PC-3 (cell line): ENCODE measurements at regions of chr2 and their contacts with region 1.

Region 1: DNA sequence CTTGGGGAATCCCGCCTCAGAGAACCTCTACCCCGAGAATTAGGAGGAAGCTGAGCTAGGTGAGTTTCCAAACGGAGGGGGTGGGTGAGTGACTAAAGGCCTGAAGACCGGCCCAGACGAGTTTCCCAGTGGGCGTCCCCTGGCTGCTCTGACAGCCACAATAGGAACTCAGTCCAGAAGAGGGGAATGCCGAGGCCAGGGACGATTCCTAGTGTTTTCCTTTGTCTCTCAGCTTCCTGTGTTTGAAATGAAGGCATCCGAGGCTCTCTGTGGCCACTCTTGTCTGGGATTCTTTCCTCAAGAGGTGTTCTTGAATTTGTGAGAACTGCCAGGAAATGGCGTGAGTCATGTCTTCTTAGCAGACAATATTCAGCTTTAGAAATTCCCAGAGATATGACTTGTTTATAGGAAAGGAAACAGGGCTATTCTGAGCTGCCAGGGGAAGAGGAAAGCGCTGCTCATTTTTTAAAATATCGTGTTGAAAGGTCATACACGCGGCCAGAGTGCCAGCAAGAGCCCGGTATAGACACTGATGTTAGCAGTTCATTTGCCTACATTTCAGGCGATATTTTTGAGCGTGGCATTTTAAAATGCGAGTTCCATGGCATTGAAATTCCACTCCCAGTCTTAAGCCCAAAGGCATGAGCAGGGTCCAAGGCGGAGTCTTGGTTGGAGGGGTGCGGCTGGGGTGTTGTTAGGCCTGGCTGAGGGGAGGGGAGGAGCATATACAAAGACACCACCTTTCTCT is 169.1 kb upstream of the KLF7 start:
- DNase-seq: peak; percentile 94
- ATAC-seq: peak; percentile 71
- H3K4me3 ChIP-seq: peak overlapping the region; percentile 57
- H3K27ac ChIP-seq: peak overlapping the region; percentile 92
- H3K4me1 ChIP-seq: peaks cover 55% of the 10 kb centered on the region
- H3K27me3 ChIP-seq: no peaks in the 10 kb centered on the region
- CTCF ChIP-seq: no peak

Region 2: GRCh38 chr2:206800506-206801417 is 534.0 kb before region 1 on chr2:
- CTCF ChIA-PET with region 1: no interaction called
- POLR2A ChIA-PET with region 1: no interaction called
- intact Hi-C with region 1: loop called (anchors 10 kb)
- DNase-seq: peak; percentile 82
- ATAC-seq: peak; percentile 84
- H3K4me3 ChIP-seq: no peak overlapping the region
- H3K27ac ChIP-seq: no peak overlapping the region
- H3K4me1 ChIP-seq: 0 out of 2 replicates have a peak, but pooled peaks cover 6% of the 10 kb centered on the region
- H3K27me3 ChIP-seq: no peaks in the 10 kb centered on the region
- CTCF ChIP-seq: peak; percentile 89

Region 3: GRCh38 chr2:207258263-207258991 is 76.4 kb before region 1 on chr2:
- CTCF ChIA-PET with region 1: no interaction called
- POLR2A ChIA-PET with region 1: no interaction called
- intact Hi-C with region 1: loop called (anchors 2 kb)
- DNase-seq: peak; percentile 96
- ATAC-seq: peak; percentile 76
- H3K4me3 ChIP-seq: no peak overlapping the region
- H3K27ac ChIP-seq: peak overlapping the region; percentile 55
- H3K4me1 ChIP-seq: peaks cover 82% of the 10 kb centered on the region
- H3K27me3 ChIP-seq: no peaks in the 10 kb centered on the region
- CTCF ChIP-seq: no peak